ACHN (cell line): ENCODE measurements at regions of chr5 and their contacts with region 1.

Region 1: DNA sequence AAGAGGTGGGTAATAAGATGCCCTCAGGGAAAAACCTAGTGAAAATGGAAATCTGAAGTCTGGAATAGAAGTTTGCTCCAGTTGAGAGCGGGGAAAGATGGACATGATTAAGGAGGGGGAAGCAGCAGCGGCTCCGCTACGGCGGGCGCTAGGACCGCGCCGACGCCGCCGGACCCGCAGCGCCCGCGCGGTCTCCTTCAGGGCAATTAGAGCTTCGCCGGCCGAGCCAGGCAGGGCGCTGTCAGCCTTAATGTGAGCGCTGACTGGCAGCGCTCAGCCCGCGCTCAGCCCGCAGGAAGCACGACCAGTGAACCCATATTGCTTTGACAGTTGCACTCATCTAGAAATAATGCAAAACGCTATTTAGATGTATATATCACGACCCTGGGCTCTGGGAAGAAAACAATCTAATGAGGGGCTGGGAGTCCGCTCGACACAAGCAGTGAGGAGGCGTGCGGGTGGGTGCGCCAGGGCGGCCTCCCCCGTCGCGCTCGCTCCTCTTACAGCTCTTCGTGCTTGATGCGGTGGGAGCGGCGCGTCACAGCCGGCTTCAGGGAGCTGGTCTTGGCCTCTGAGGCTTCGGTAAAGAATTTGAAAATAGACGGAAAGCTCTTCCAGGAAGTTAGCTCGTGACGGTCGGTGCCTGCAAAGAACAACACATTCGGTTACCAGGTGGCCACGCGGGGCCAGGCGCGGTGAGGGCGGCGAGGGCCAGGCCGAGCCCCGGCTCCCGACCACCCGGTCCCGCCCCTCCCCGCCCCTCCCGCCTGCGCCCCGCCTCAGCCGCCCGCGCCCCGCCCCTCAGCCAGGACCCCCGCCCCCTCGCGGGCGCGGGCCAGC is 37.7 kb downstream of the NR2F1 start:
- DNase-seq: peak; percentile 71

Region 2: DNA sequence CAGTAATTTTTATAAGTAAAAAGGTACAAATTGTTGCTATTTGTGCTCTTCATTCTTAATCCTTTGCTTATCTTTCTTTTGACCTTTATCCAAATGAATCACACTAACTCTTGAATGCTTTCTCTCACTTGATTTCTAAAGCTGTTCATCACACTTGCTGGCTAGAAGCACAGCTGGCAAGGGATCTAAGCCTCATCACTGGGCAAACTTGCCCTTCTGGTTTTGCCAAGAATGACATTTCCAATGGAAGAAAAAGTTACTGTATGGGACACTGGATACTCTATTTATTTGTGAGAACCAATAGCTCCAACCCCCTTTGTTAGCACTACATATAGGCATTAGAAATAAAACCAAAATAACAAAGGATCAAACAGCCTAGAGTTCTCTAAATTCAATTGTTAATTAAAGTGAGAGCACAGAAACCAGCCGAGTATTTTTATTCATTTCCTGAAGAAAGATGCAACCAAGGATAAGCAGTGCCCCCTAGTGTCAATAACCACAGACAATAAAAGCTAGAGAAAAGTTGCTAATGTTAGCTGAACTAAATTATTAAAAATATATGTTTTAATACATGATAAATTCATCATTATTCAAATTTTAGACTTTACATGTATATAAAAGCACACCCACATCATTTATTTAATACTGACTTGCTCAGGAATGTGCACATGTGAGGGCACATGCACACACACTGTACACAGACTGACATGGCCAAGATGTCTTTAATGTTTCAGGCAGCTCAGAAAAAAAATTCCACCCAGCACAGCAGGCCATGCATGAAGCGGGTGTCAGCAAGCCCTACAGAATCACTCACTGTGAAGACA is 180.5 kb after region 1 on chr5:
- in situ Hi-C with region 1: loop called (anchors 25 kb)
- DNase-seq: peak; percentile 52